ENCODE measurements at regions of chr11 and their contacts with region 1.

Region 1: GRCh38 chr11:16605894-16606783 is 132.3 kb upstream of the C11orf58 start:
- DNase-seq: peak; percentile 91
- H3K4me3 Mint-ChIP-seq: no peak overlapping the region
- H3K27ac Mint-ChIP-seq: no peak overlapping the region
- H3K4me1 Mint-ChIP-seq: no peaks in the 10 kb centered on the region
- H3K27me3 Mint-ChIP-seq: peaks cover under 1% of the 10 kb centered on the region
- CTCF ChIP-seq: peak; percentile 91

Region 2: DNA sequence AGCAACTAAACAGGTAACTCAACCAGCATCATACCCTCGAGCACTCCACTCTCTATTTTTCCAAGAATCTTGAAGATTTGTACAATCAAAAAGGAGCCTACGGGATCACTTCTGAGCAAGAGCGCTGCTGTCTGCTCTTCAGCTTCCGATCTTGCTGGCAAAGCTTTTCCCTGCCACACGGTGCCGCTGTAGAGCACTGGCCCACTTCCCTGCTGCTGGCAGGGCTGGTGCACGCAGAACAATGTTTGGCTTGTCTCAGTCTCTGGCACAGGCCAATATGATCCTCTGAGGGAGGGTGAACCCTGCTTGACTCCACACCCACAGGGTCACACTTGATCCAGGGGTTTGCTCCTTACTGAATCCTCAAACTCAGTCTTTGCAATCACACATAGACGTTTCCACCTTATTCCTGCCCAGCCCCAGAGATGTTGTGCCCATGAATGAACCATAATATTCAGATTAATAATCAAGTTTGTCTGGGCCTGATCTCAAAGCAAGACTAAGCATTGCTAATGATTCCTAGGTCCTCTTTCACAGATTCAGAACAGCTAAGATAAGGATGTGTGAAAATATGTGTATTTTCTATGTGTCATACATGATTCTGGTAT is 786.4 kb before region 1 on chr11:
- CTCF ChIA-PET with region 1: interaction called, 4 read pairs
- POLR2A ChIA-PET with region 1: interaction called, 10 read pairs
- intact Hi-C with region 1: loop called (anchors 1 kb)
- DNase-seq: peak; percentile 72
- H3K4me3 Mint-ChIP-seq: no peak overlapping the region
- H3K27ac Mint-ChIP-seq: no peak overlapping the region
- H3K4me1 Mint-ChIP-seq: peaks cover 38% of the 10 kb centered on the region
- H3K27me3 Mint-ChIP-seq: no peaks in the 10 kb centered on the region
- CTCF ChIP-seq: peak; percentile 87

Region 3: GRCh38 chr11:15969281-15969680 is 636.9 kb before region 1 on chr11:
- CTCF ChIA-PET with region 1: no interaction called
- POLR2A ChIA-PET with region 1: interaction called, 12 read pairs
- intact Hi-C with region 1: loop called (anchors 1 kb)
- DNase-seq: peak; percentile 83
- H3K4me3 Mint-ChIP-seq: peak overlapping the region; percentile 30
- H3K27ac Mint-ChIP-seq: peak overlapping the region; percentile 91
- H3K4me1 Mint-ChIP-seq: peaks cover 45% of the 10 kb centered on the region
- H3K27me3 Mint-ChIP-seq: no peaks in the 10 kb centered on the region
- CTCF ChIP-seq: no peak

Region 4: GRCh38 chr11:16191212-16191867 is 414.8 kb before region 1 on chr11:
- CTCF ChIA-PET with region 1: interaction called, 15 read pairs
- POLR2A ChIA-PET with region 1: interaction called, 3 read pairs
- intact Hi-C with region 1: loop called (anchors 1 kb)
- DNase-seq: no peak
- H3K4me3 Mint-ChIP-seq: no peak overlapping the region
- H3K27ac Mint-ChIP-seq: no peak overlapping the region
- H3K4me1 Mint-ChIP-seq: peaks cover 10% of the 10 kb centered on the region
- H3K27me3 Mint-ChIP-seq: no peaks in the 10 kb centered on the region
- CTCF ChIP-seq: no peak

Region 5: GRCh38 chr11:16347928-16348685 is 258.0 kb before region 1 on chr11:
- CTCF ChIA-PET with region 1: no interaction called
- POLR2A ChIA-PET with region 1: interaction called, 44 read pairs
- intact Hi-C with region 1: no loop called
- DNase-seq: peak; percentile 17
- H3K4me3 Mint-ChIP-seq: no peak overlapping the region
- H3K27ac Mint-ChIP-seq: no peak overlapping the region
- H3K4me1 Mint-ChIP-seq: peaks cover 13% of the 10 kb centered on the region
- H3K27me3 Mint-ChIP-seq: no peaks in the 10 kb centered on the region
- CTCF ChIP-seq: no peak

Region 6: GRCh38 chr11:16528639-16529038 is 77.5 kb before region 1 on chr11:
- CTCF ChIA-PET with region 1: interaction called, 3 read pairs
- POLR2A ChIA-PET with region 1: interaction called, 22 read pairs
- intact Hi-C with region 1: no loop called
- DNase-seq: no peak
- H3K4me3 Mint-ChIP-seq: no peak overlapping the region
- H3K27ac Mint-ChIP-seq: no peak overlapping the region
- H3K4me1 Mint-ChIP-seq: peaks cover 6% of the 10 kb centered on the region
- H3K27me3 Mint-ChIP-seq: no peaks in the 10 kb centered on the region
- CTCF ChIP-seq: no peak

Region 7: GRCh38 chr11:16669799-16670415 is 63.8 kb after region 1 on chr11:
- CTCF ChIA-PET with region 1: no interaction called
- POLR2A ChIA-PET with region 1: no interaction called
- intact Hi-C with region 1: no loop called
- DNase-seq: peak; percentile 66
- H3K4me3 Mint-ChIP-seq: no peak overlapping the region
- H3K27ac Mint-ChIP-seq: peak overlapping the region; percentile 64
- H3K4me1 Mint-ChIP-seq: peaks cover 11% of the 10 kb centered on the region
- H3K27me3 Mint-ChIP-seq: no peaks in the 10 kb centered on the region
- CTCF ChIP-seq: no peak

Measured in MCF 10A (cell line).